HAP-1 (cell line): ENCODE measurements at regions of chr17 and their contacts with region 1.

Region 1: DNA sequence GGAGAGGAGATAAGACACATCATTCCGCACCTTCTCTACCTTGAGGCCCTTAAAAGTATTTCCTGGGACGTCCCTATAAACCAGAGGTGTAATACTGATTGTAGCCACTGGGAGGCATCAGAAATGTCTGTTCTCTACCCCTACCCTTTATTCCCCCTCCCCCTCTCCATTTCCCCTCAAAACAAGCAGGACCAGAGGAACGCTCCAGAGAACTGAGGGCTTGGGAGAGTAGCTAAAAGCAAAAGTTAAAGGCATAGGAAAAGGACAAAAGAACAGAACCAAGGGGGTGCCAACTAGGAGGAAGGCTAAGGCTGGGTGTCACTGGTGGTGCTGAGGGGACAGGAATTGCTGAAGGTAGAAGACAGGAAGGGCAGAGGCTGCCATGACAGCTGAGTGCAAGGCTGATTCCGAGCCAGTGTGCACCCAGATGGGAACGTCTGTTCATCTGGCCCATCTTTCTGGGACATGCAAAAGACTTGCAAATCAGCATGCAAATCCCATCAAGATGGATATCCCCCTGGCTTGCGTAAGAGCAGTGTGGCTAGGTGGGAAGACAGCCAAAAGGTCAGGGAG is 6.7 kb downstream of the CAMTA2 start:
- DNase-seq: peak; percentile 54 to 77
- H3K4me3 ChIP-seq: no peak overlapping the region
- H3K4me1 ChIP-seq: no peaks in the 10 kb centered on the region
- H3K27me3 ChIP-seq: no peaks in the 10 kb centered on the region

Region 2: DNA sequence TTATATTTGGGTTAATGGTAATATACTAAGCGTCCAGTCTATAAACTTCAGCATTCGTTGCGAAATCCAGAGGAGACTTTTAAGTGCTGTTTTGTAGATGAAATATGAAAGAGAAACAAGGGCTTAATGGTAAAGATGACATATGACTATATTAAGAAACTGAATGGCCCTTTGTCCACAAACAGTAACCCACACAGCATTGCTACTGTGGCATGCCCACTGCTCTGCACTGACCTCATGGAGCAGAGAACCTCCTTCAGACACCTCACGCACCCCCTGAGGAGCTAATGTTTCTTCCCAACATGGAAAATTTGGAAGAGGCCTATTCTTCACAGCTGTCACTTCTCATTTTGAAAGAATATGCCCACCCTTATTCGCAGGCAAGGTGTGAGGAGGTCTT is 1478.3 kb before region 1 on chr17:
- in situ Hi-C with region 1: no loop called
- DNase-seq: no peak
- H3K4me3 ChIP-seq: no peak overlapping the region
- H3K4me1 ChIP-seq: no peaks in the 10 kb centered on the region
- H3K27me3 ChIP-seq: no peaks in the 10 kb centered on the region

Region 3: DNA sequence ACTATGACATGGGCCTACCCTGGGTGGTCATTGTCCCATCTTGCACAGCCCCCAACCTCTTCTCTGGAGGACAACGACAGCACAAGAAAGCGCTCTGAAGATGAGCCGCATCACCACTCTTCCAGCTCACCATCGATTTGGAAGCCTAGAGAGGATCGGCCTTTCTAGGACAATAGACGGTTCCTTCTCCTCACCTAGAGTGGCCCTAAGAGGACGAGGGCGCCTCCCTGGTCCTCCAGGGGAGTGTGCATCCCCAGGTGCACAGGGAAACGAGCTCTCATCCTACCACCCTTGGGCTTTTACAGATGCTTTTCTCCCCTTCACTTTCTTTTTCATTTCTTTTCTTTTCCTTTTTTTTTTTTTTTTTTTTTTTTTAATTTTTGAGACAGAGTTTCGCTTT is 74.8 kb after region 1 on chr17:
- in situ Hi-C with region 1: loop called (anchors 5 kb)
- DNase-seq: no peak
- H3K4me3 ChIP-seq: no peak overlapping the region
- H3K4me1 ChIP-seq: no peaks in the 10 kb centered on the region
- H3K27me3 ChIP-seq: no peaks in the 10 kb centered on the region

Region 4: GRCh38 chr17:5486204-5487124 is 505.7 kb after region 1 on chr17 and contains the start of gene MIS12:
- in situ Hi-C with region 1: no loop called
- DNase-seq: peak; percentile 98 to 99
- H3K4me3 ChIP-seq: peak within 1 kb of the TSS; percentile 86
- H3K4me1 ChIP-seq: peaks cover 9% of the 10 kb centered on the region
- H3K27me3 ChIP-seq: no peaks in the 10 kb centered on the region